Breast epithelium (tissue), 4 donors: ENCODE measurements at regions of chr7 and their contacts with region 1.

Region 1: DNA sequence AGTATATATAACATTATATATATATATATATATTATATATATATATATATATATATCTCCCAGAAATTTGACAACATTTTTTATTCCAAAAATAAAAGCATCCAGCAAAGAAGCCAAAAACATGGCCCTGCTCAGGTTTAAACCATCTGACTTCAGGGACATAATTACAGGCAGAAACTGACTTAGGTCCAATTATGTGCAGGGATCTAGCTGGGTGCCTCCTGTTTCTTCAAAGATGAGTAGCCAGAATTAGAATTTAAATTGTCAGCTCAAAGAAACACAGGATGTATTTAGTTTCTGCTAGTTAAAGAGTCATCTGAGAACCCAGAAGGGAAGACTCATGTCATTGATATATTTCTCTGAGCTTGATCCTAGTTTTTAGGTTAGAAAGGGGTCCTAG is 656.4 kb upstream of the TEX47 start:
- DNase-seq: no peak
- H3K4me3 ChIP-seq: no peak overlapping the region
- H3K27ac ChIP-seq: no peak overlapping the region
- H3K4me1 ChIP-seq: no peaks in the 10 kb centered on the region
- H3K27me3 ChIP-seq: no peaks in the 10 kb centered on the region
- CTCF ChIP-seq: no peak
- POLR2A ChIP-seq: no peak

Region 2: GRCh38 chr7:89160107-89160506 is 291.8 kb before region 1 on chr7:
- intact Hi-C with region 1: no loop called
- DNase-seq: no peak
- H3K4me3 ChIP-seq: no peak overlapping the region
- H3K27ac ChIP-seq: no peak overlapping the region
- H3K4me1 ChIP-seq: no peaks in the 10 kb centered on the region
- H3K27me3 ChIP-seq: no peaks in the 10 kb centered on the region
- CTCF ChIP-seq: no peak
- POLR2A ChIP-seq: no peak

Region 3: GRCh38 chr7:89474456-89474855 is 22.5 kb after region 1 on chr7:
- intact Hi-C with region 1: no loop called
- DNase-seq: no peak
- H3K4me3 ChIP-seq: no peak overlapping the region
- H3K27ac ChIP-seq: no peak overlapping the region
- H3K4me1 ChIP-seq: no peaks in the 10 kb centered on the region
- H3K27me3 ChIP-seq: no peaks in the 10 kb centered on the region
- CTCF ChIP-seq: no peak
- POLR2A ChIP-seq: no peak

Region 4: GRCh38 chr7:90078921-90079320 is 627.0 kb after region 1 on chr7:
- intact Hi-C with region 1: loop called (anchors 5 kb)
- DNase-seq: no peak
- H3K4me3 ChIP-seq: no peak overlapping the region
- H3K27ac ChIP-seq: no peak overlapping the region
- H3K4me1 ChIP-seq: no peaks in the 10 kb centered on the region
- H3K27me3 ChIP-seq: no peaks in the 10 kb centered on the region
- CTCF ChIP-seq: no peak
- POLR2A ChIP-seq: no peak